H1 (cell line): ENCODE measurements at regions of chr2 and their contacts with region 1.

Region 1: DNA sequence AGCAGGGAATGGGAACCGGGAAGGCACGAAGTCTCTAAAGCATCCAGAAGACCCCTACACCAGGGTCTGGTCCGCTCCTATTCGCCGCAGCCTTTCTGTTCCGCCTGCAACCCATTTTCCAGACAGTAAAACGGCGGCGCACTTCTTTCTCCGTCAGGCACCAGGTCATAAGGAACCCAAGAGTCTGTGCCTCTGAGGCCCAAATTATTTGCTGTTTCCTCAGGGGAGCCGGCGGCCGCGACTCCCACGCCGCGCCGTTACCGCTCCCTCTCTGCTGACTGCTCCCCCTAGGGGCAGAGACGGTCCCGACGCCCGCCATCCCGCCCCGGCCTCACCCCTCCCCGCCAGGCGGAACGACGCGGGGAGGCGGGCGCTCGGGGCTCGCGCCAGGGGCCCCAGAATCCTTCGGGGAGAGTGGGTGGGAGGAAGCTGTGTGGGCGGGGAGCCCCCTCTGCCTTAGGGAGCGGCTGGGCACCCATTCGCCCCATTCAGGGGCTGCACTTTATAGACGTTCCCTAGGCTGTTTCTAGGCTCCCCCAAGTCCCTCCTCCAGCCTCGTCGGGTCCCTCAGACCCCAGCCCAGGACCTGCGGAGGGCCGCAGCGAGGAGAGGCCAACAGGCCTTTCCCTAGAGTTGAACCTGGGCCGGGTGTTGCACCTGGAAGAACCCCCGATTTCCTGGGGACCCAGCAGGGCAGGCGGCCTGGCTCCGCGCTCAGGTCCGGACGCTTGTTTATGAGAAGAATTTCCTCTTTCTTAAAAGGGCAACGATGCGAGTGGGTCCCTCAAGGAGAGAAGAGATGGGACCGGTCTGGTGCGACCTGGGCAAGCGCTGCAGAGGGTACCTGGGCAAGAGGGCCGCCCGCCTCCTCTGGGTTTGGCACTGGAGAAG is 3.6 kb upstream of the CTDSP1 start:
- DNase-seq: peak; percentile 71 to 96
- H3K4me3 ChIP-seq: peak overlapping the region; percentile 49 to 77 (median 64)
- H3K27ac ChIP-seq: peak overlapping the region; percentile 94
- H3K4me1 ChIP-seq: peaks cover 0 to 39% (median 25%) of the 10 kb centered on the region in 4 experiments; a peak in 6 of 7 replicates
- H3K27me3 ChIP-seq: peaks cover 22 to 34% (median 31%) of the 10 kb centered on the region in 4 experiments
- CTCF ChIP-seq: peak in 2 of 3 experiments; percentile 70 to 75; a peak in 3 of 4 replicates
- EP300 ChIP-seq: 0 out of 3 replicates have a peak, but pooled peaks of 1 of the 2 experiments have one; percentile 69
- POLR2A ChIP-seq: no peak; a peak in 1 of 3 replicates
- RAD21 ChIP-seq: peak; percentile 60 to 69

Region 2: DNA sequence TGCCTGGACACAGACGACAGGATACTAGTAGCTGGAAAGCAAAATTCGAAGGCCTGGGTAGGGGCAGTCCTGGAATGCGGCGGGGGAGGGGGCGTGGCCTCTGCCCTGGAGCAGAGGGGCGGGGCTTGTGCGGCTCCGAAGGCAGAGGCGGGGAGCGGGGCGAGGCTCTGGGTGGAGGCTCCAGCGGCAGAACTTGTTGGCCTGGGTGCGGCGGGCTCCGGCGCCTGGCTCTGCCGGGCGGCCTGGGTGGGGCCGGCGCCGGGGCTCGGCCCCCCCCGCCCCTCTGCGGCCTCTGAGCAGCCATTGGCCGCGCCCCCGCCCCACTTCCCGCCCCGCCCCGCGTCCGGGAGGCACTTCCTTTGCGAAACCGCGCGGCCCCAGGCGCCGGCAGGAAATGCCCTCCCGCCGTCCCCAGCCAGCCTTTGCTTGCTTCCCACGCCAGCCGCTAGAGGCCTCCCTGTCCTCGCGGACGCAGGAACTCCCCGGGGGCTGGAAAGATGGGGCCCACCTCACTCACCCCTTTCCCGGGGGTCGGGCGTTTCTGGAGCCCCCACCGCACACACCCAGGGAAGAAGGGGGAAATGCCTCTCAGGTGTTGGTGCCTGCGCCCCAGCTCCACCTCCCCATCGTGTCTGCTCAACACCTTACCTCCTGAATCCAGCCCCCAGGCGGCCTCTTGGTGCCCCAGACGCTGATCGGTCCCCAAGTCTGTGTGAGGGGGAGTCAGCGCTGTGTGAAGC is 10.3 kb after region 1 on chr2:
- CTCF ChIA-PET with region 1: interaction called, 13 read pairs
- POLR2A ChIA-PET with region 1: interaction called, 35 read pairs
- DNase-seq: peak; percentile 85 to 98
- H3K4me3 ChIP-seq: peak overlapping the region; percentile 45 to 75 (median 62)
- H3K27ac ChIP-seq: peak overlapping the region; percentile 82; the same call in 1 of the 2 replicates
- H3K4me1 ChIP-seq: peaks cover 12 to 25% (median 19%) of the 10 kb centered on the region in 4 experiments
- H3K27me3 ChIP-seq: no peaks in the 10 kb centered on the region
- CTCF ChIP-seq: peak in 2 of 3 experiments; percentile 73 to 78; a peak in 3 of 4 replicates
- EP300 ChIP-seq: no peak
- POLR2A ChIP-seq: no peak
- RAD21 ChIP-seq: peak; percentile 80

Region 3: GRCh38 chr2:218671097-218671653 is 275.1 kb after region 1 on chr2:
- CTCF ChIA-PET with region 1: no interaction called
- POLR2A ChIA-PET with region 1: no interaction called
- DNase-seq: no peak
- H3K4me3 ChIP-seq: peak overlapping the region; percentile 96 to 99 (median 96)
- H3K27ac ChIP-seq: peak overlapping the region; percentile 86
- H3K4me1 ChIP-seq: peaks cover 0 to 4% (median 1%) of the 10 kb centered on the region in 4 experiments; a peak in 3 of 7 replicates
- H3K27me3 ChIP-seq: no peaks in the 10 kb centered on the region
- CTCF ChIP-seq: no peak
- EP300 ChIP-seq: no peak
- POLR2A ChIP-seq: 0 out of 3 replicates have a peak, but pooled peaks of 1 of the 2 experiments have one; percentile 7
- RAD21 ChIP-seq: no peak

Region 4: DNA sequence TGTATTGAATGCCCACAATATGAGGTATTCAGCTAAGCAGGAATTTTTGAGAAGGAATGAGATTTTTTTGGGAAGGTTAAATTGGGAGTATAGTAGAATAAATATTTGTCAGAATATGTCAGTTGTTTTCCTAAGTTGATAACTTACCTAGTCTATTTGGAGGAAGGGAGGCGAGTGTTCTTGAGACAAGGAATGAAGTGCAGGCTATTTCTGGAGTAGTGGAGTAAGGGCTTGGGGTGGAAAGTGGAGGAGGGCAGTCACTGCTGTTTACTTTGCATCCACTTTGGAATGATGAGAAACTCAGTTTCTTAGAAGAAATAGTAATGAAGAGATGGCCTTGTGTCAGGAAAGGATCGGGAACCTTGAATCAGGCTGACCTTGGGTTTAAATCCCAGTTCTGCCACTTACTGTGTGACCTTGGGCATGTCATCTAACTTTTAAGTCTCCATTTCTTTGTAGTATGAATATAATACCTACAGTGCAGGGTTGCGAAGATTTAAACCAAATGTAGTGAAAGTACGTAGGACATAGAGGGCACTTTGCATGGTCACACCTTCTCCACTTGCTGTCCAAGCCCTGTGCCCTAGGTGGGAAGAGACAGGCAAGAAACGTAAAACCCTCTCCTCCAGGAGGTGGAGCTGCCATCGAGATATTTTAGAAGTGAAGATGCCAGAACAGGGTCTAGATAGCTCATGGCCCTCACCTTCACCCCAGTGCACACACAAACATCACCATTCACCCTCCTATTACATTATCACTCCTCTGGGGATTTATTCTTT is 360.7 kb after region 1 on chr2:
- CTCF ChIA-PET with region 1: no interaction called
- POLR2A ChIA-PET with region 1: no interaction called
- DNase-seq: no peak
- H3K4me3 ChIP-seq: no peak overlapping the region
- H3K27ac ChIP-seq: no peak overlapping the region
- H3K4me1 ChIP-seq: no peaks in the 10 kb centered on the region
- H3K27me3 ChIP-seq: no peaks in the 10 kb centered on the region
- CTCF ChIP-seq: peak; percentile 6 to 46 (median 39); a peak in 3 of 4 replicates
- EP300 ChIP-seq: no peak
- POLR2A ChIP-seq: no peak
- RAD21 ChIP-seq: peak in 1 of 2 experiments; percentile 42; a peak in 1 of 4 replicates